ENCODE measurements at regions of chr6 and their contacts with region 1.

Region 1: GRCh38 chr6:133512410-133513016 is 271.4 kb downstream of the EYA4 start:
- DNase-seq: peak; percentile 33
- ATAC-seq: peak; percentile 83
- H3K4me3 ChIP-seq: no peak overlapping the region
- H3K27ac ChIP-seq: no peak overlapping the region
- H3K4me1 ChIP-seq: no peaks in the 10 kb centered on the region
- H3K27me3 ChIP-seq: no peaks in the 10 kb centered on the region; the same call in 1 of the 2 replicates
- CTCF ChIP-seq: peak; percentile 70

Region 2: GRCh38 chr6:132962936-132963868 is 549.3 kb before region 1 on chr6:
- CTCF ChIA-PET with region 1: no interaction called
- POLR2A ChIA-PET with region 1: no interaction called
- in situ Hi-C with region 1: no loop called
- intact Hi-C with region 1: loop called (anchors 1 kb)
- DNase-seq: peak; percentile 24
- ATAC-seq: peak; percentile 92
- H3K4me3 ChIP-seq: no peak overlapping the region
- H3K27ac ChIP-seq: no peak overlapping the region
- H3K4me1 ChIP-seq: no peaks in the 10 kb centered on the region
- H3K27me3 ChIP-seq: no peaks in the 10 kb centered on the region
- CTCF ChIP-seq: peak; percentile 84

Region 3: GRCh38 chr6:133184798-133185372 is 327.6 kb before region 1 on chr6:
- CTCF ChIA-PET with region 1: no interaction called
- POLR2A ChIA-PET with region 1: no interaction called
- in situ Hi-C with region 1: no loop called
- intact Hi-C with region 1: loop called (anchors 2 kb)
- DNase-seq: no peak
- ATAC-seq: no peak
- H3K4me3 ChIP-seq: no peak overlapping the region
- H3K27ac ChIP-seq: no peak overlapping the region
- H3K4me1 ChIP-seq: no peaks in the 10 kb centered on the region
- H3K27me3 ChIP-seq: no peaks in the 10 kb centered on the region
- CTCF ChIP-seq: peak; percentile 68; the same call in 1 of the 2 replicates

Region 4: GRCh38 chr6:133388731-133389130 is 123.8 kb before region 1 on chr6:
- CTCF ChIA-PET with region 1: no interaction called
- POLR2A ChIA-PET with region 1: no interaction called
- in situ Hi-C with region 1: no loop called
- intact Hi-C with region 1: loop called (anchors 5 kb)
- DNase-seq: no peak
- ATAC-seq: no peak
- H3K4me3 ChIP-seq: no peak overlapping the region
- H3K27ac ChIP-seq: no peak overlapping the region
- H3K4me1 ChIP-seq: no peaks in the 10 kb centered on the region
- H3K27me3 ChIP-seq: no peaks in the 10 kb centered on the region; the same call in 1 of the 2 replicates
- CTCF ChIP-seq: no peak

Measured in Panc1 (cell line).